ENCODE measurements at regions of chr1 and their contacts with region 1.

Region 1: DNA sequence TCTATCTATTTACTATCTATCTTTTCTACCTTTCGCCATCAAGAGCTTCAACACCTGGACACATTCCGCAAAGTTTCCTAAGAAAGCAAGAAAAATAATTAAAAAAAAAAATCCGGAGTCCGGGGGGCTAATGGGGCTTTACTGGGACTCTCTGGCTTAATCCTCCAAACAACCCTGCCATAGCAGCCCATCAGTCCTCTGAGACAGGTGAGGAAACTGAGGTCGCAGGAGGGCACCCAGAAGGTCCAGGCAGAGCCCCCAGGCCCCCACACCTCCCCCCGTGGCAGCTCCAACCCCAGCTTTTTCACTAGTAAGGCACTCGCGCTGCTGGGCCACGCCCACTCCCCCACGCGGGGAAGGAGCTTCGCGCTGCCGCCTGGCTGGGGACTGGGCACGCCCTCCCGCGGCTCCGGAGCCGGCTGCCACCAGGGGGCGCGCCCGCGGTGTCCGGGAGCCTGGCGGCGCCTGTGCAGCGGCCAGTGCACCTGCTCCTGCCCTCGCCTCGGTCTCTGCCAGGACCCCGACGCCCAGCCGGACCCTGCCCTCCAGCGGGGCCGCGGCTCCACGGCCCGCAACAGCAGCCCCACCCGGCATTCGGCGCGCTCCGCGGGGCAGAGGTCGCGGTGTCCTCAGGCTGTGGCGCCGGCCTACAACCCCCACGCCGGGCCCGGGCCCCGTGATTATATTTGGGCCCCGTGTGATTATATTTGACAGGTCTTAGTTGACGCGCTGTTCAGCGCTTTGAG is 54.1 kb upstream of the SAMD11 start:
- DNase-seq: peak; percentile 89
- ATAC-seq: peak; percentile 95
- H3K4me3 Mint-ChIP-seq: no peak overlapping the region
- H3K27ac Mint-ChIP-seq: no peak overlapping the region
- H3K4me1 Mint-ChIP-seq: peaks cover 2% of the 10 kb centered on the region
- H3K27me3 Mint-ChIP-seq: peaks cover 19% of the 10 kb centered on the region

Region 2: DNA sequence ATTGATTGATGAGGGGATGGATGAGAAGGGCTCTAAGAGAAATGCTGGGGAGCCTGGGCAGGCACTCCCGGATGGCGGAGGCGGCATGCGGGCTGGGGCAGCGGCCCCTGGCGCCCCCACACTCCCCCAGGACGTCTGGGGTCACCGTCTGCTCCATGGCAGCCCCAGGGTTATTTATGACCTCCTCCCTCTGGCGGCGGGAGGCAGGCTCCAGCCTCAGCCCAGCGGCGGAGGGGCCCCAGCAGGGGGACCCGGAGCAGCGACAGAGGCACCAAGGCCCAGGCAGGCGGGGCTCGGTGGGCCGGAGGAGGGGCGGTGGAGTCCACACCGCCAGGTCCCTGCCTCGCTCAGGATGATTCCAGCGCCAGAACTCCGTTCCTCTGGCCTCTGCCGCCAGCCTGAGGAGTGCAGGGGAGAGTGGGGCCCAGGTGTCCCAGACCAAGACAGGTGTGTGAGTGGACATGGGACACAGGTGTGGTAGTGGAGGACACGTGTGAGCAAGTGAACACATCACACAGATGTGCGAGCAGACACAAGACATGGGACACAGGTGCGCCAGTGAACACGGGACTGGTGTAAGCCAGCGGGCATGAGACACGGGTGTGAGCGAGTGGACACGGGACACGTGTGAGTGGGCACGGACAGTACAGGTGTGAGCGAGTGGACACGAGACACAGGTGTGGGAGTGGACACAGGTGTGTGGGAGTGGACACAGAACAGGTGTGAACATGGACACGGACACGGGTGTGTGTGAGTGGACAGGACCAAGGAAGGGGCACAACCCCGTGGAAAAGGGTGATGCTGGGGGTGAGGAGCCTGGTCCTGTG is 51.6 kb after region 1 on chr1:
- CTCF ChIA-PET with region 1: interaction called, 5 read pairs
- POLR2A ChIA-PET with region 1: no interaction called
- intact Hi-C with region 1: loop called in 1 of 2 experiments (anchors 5 kb)
- DNase-seq: peak; percentile 52
- ATAC-seq: peak; percentile 42
- H3K4me3 Mint-ChIP-seq: no peak overlapping the region
- H3K27ac Mint-ChIP-seq: no peak overlapping the region
- H3K4me1 Mint-ChIP-seq: peaks cover 12% of the 10 kb centered on the region
- H3K27me3 Mint-ChIP-seq: peaks cover 42% of the 10 kb centered on the region

Region 3: DNA sequence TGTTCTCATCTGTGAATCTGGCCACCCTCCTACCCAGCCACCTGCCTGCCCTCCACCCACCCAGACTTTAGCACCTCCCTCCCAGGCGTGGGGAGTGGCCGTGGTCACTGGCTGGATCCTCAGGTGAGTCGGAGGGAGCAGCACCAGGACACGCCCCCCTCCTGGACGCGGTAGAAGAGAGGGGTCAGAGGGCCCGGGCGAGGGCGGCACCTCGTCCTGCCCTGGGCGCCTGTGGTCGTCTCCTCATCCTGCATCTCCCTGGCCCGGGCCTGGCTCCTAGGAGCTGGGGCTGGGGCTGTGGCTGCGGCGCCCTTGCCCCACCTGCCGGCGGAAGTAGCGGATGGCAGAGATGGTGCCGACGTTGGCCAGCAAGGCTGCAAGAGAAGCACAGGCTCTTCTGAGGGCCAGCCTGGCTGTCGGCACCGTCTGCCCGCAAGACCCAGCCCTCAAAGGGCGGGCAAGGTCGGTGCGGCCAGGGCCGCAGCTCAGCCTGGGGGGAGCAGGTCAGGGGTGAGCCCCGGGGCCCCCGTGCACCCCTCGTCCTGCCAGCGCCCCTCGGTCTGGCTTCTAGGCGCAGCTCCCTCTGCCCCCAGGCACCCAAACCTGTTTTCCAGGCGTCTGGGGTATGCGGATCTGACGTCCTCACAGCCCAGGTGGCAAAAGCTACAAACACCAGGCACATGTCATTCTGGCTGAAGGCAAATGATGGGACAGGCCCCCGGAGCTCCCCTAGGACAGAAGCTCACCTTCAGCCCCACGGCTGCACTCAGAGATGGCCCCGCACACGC is 106.4 kb after region 1 on chr1:
- CTCF ChIA-PET with region 1: no interaction called
- POLR2A ChIA-PET with region 1: no interaction called
- intact Hi-C with region 1: loop called (anchors 1 kb)
- DNase-seq: peak; percentile 88
- ATAC-seq: peak; percentile 97
- H3K4me3 Mint-ChIP-seq: no peak overlapping the region
- H3K27ac Mint-ChIP-seq: no peak overlapping the region
- H3K4me1 Mint-ChIP-seq: peaks cover 6% of the 10 kb centered on the region
- H3K27me3 Mint-ChIP-seq: peaks cover 8% of the 10 kb centered on the region

Measured in activated CD4-positive, alpha-beta T cell treated with anti-CD3 and anti-CD28 coated beads for 36 hours (primary cell).